ENCODE measurements at regions of chr11 and their contacts with region 1.

Region 1: GRCh38 chr11:76919887-76920746 is 59.4 kb downstream of the ACER3 start:
- DNase-seq: peak; percentile 94
- H3K4me3 ChIP-seq: no peak overlapping the region
- H3K27ac ChIP-seq: no peak overlapping the region
- H3K4me1 ChIP-seq: peaks cover 6% of the 10 kb centered on the region
- H3K27me3 ChIP-seq: no peaks in the 10 kb centered on the region
- CTCF ChIP-seq: peak; percentile 98

Region 2: DNA sequence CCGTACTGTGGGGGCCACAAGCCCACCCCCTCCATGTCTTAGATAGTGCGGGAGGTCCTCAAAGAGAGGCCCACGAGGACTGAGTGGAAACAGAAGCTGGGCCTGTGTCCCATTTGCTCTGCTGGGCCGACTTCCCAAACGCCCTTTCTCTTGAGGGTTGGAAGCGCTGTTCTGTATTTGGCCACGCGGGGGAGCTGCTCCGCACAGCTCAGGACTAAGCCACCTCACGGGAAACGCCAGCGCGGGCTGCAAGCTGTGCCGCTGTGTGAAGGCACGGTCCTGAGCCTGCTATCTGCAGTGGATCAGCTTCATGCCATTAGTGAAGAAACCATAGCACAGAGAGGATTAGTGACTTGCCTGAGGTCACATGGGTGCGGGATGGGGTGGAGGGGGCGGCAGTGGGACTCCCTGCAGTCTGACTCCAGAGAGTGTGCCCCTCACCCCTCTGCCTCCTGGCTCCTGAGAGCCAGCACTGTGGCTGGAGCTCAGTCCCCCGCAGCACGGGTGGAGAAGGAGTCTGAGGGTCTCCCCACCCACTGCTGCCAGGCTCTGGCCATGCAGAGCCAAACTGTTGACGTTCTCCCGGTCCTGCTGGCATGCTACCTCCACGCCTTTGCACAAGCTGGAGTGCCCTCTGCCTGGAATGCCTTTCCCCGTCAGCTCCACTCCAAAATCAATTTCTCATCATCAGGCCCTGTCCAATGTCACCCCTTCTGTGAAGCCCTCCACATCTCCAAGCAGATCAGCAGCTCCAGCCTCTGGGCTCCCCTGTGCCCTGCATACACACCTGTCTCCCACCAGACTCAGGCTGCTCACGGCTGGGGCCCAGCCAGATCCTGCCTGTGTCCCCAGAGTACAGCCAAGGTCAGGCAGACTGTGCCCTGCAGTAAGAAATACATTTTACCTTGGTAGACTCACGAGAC is 198.1 kb before region 1 on chr11:
- CTCF ChIA-PET with region 1: interaction called, 18 read pairs
- POLR2A ChIA-PET with region 1: no interaction called
- intact Hi-C with region 1: no loop called
- DNase-seq: peak; percentile 93
- H3K4me3 ChIP-seq: no peak overlapping the region
- H3K27ac ChIP-seq: no peak overlapping the region
- H3K4me1 ChIP-seq: no peaks in the 10 kb centered on the region
- H3K27me3 ChIP-seq: peaks cover 10% of the 10 kb centered on the region
- CTCF ChIP-seq: peak; percentile 99

Region 3: DNA sequence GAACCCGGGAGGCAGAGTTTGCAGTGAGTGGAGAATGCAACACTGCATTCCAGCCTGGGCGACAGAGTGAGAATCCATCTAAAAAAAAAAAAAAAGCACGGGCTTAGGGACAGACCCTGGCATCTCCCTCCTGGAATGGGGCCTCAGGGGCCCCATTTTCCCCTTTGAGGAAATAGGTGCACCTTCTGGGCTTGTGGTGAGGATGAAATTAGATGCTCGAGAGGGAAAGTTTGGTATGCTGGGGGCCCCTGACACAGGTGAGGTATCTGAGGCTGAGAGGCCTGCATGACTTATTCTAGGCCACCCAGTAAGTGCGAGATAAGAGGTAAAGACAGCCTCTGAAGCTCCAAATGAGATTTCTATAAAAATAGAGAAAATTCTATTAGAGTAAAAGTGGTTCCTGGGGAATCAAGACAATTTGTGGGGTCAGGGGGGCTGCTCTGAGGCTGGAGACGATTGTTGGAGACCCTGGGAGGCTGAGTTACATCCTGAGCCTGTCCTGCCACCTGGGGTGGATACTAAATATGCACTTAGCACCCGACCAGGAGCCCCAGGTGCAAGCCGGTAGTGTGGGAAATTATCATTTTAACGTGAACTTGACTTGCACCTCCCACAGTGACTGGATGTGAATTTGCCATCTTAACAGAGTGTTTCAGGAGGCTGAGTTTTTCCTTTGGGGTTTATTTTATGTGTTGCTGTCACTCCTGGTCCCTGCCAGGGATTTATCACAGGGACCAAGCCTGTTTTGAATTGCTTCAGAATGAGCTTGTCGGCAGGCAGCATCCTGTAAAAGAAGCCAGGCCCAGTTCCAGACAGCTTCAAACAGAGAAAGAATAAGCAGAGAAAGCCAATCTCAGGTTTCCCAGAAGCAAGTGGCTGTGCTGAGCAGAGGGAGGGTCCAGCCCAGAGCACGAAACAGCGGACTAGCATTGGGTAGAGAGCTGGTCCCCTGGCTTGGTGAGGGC is 185.4 kb before region 1 on chr11:
- CTCF ChIA-PET with region 1: interaction called, 9 read pairs
- POLR2A ChIA-PET with region 1: no interaction called
- intact Hi-C with region 1: loop called (anchors 1 kb)
- DNase-seq: no peak
- H3K4me3 ChIP-seq: no peak overlapping the region
- H3K27ac ChIP-seq: no peak overlapping the region
- H3K4me1 ChIP-seq: no peaks in the 10 kb centered on the region
- H3K27me3 ChIP-seq: no peaks in the 10 kb centered on the region
- CTCF ChIP-seq: no peak

Region 4: GRCh38 chr11:76807206-76807875 is 112.8 kb before region 1 on chr11:
- CTCF ChIA-PET with region 1: interaction called, 3 read pairs
- POLR2A ChIA-PET with region 1: no interaction called
- intact Hi-C with region 1: loop called (anchors 1 kb)
- DNase-seq: peak; percentile 95
- H3K4me3 ChIP-seq: no peak overlapping the region
- H3K27ac ChIP-seq: peak overlapping the region; percentile 66
- H3K4me1 ChIP-seq: peaks cover 12% of the 10 kb centered on the region
- H3K27me3 ChIP-seq: no peaks in the 10 kb centered on the region
- CTCF ChIP-seq: peak; percentile 89

Region 5: DNA sequence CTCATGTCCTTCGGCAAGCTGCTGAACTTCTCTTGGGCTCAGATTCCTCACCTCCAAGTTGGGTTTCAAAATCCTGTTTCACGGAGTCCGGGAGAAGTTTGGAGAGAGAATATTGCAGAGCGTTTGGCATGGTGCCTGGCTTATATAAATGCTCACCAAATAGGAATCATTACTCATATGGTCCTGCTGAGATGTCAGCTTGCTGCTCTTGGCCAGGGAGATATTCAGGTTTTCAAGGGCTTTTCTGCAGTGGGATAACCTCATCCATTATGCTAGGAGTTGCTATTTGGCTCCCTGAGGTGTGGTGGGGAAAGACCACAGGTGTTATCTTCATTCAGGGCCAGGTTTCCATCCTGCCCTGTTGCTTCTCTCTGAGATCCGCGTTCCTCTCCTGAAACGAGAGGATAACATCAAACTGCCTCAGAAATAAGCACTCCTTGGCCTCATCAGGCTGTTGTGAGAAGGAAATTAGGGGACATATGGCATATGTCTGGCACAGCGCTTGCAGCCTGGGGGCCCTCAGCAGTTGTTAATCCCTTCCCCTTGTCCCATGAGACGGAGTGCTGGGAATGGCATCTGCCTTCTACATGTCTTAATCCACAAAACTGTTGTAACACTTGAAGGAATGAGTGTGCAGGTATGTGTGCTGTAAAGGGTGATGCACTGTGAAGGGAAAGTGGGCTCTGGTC is 89.3 kb before region 1 on chr11:
- CTCF ChIA-PET with region 1: interaction called, 10 read pairs
- POLR2A ChIA-PET with region 1: no interaction called
- intact Hi-C with region 1: no loop called
- DNase-seq: peak; percentile 66
- H3K4me3 ChIP-seq: no peak overlapping the region
- H3K27ac ChIP-seq: no peak overlapping the region
- H3K4me1 ChIP-seq: peaks cover 13% of the 10 kb centered on the region
- H3K27me3 ChIP-seq: no peaks in the 10 kb centered on the region
- CTCF ChIP-seq: no peak

Region 6: GRCh38 chr11:77039491-77040400 is 119.6 kb after region 1 on chr11:
- CTCF ChIA-PET with region 1: interaction called, 3 read pairs
- POLR2A ChIA-PET with region 1: no interaction called
- intact Hi-C with region 1: loop called (anchors 2 kb)
- DNase-seq: peak; percentile 76
- H3K4me3 ChIP-seq: peak overlapping the region; percentile 44
- H3K27ac ChIP-seq: no peak overlapping the region
- H3K4me1 ChIP-seq: no peaks in the 10 kb centered on the region
- H3K27me3 ChIP-seq: no peaks in the 10 kb centered on the region
- CTCF ChIP-seq: peak; percentile 79

Measured in A673 (cell line).